WTC11 (cell line): ENCODE measurements at regions of chr1 and their contacts with region 1.

Region 1: DNA sequence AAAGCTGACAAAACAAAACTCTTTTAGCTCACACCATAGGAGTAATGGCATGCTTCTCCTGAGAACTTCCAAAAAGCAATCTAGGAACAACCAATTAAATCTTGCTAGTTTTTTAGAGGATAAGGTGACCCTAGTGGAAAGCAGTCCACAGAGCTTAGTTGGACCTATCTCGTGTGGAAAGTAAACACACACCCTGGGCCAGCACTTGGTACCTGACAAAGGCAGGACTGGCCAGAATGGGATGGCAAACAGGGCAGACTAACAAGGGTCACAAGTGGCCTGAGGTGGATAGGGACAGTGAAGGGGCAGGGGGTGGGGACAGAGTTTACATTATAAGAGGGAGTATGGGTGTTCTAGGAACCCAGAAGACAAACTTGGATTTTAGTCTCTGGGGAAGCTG is 22.0 kb downstream of the FMO4 start:
- DNase-seq: no peak
- ATAC-seq: peak; percentile 26; the same call in 1 of the 2 replicates
- H3K4me3 Mint-ChIP-seq: no peak overlapping the region
- H3K27ac Mint-ChIP-seq: no peak overlapping the region
- H3K4me1 Mint-ChIP-seq: peaks cover 2% of the 10 kb centered on the region
- H3K27me3 Mint-ChIP-seq: no peaks in the 10 kb centered on the region
- CTCF ChIP-seq: no peak

Region 2: DNA sequence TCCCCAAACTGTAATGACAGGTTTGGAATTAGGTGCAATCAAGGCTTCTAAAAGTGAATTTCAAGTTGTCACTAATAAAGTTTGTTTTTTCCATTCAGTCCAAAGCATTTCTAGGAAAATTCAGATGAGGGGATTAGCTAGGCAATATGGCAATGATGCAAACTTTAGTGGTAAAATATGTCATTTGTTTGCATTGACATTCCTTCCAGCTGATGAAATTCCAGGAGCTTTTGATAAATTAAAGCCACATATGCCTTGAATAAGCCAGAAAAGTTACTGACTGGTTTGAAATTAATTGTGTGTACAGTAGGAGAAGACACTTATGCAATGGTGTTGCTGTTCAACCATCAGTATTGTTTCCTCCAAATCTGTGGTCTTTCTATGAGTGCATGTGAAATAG is 342.8 kb before region 1 on chr1:
- CTCF ChIA-PET with region 1: no interaction called
- POLR2A ChIA-PET with region 1: no interaction called
- DNase-seq: no peak
- ATAC-seq: no peak
- H3K4me3 Mint-ChIP-seq: no peak overlapping the region
- H3K27ac Mint-ChIP-seq: no peak overlapping the region
- H3K4me1 Mint-ChIP-seq: no peaks in the 10 kb centered on the region
- H3K27me3 Mint-ChIP-seq: no peaks in the 10 kb centered on the region
- CTCF ChIP-seq: no peak

Region 3: GRCh38 chr1:171355727-171356126 is 19.8 kb after region 1 on chr1:
- CTCF ChIA-PET with region 1: interaction called, 10 read pairs
- POLR2A ChIA-PET with region 1: no interaction called
- DNase-seq: no peak
- ATAC-seq: no peak
- H3K4me3 Mint-ChIP-seq: no peak overlapping the region
- H3K27ac Mint-ChIP-seq: no peak overlapping the region
- H3K4me1 Mint-ChIP-seq: peaks cover 23% of the 10 kb centered on the region
- H3K27me3 Mint-ChIP-seq: no peaks in the 10 kb centered on the region
- CTCF ChIP-seq: no peak